ENCODE measurements at regions of chr7 and their contacts with region 1.

Region 1: DNA sequence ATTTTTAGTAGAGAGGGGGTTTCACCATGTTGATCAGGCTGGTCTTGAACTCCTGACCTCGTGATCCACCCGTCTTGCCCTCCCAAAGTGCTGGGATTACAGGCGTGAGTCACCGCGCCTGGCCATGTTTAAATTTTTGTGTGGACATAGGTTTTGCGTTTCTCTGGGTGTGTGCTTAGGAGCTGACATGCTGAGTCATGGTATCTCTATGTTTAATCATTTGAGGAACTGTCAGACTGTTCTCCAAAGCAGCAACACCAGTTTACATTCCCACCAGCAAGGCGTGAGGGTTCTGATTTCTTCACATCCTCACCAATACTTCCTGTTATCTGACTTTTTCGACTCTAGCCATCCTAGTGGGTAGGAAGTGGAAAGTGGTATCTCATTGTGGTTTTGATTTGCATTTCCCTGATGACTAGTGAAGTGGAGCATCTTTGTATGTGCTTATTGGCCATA is 153.7 kb downstream of the DNAJB6 start:
- DNase-seq: peak; percentile 58
- ATAC-seq: peak; percentile 81
- H3K4me3 Mint-ChIP-seq: no peak overlapping the region
- H3K27ac Mint-ChIP-seq: peak overlapping the region; percentile 35
- H3K4me1 Mint-ChIP-seq: peaks cover 35% of the 10 kb centered on the region
- H3K27me3 Mint-ChIP-seq: peaks cover 9% of the 10 kb centered on the region

Region 2: DNA sequence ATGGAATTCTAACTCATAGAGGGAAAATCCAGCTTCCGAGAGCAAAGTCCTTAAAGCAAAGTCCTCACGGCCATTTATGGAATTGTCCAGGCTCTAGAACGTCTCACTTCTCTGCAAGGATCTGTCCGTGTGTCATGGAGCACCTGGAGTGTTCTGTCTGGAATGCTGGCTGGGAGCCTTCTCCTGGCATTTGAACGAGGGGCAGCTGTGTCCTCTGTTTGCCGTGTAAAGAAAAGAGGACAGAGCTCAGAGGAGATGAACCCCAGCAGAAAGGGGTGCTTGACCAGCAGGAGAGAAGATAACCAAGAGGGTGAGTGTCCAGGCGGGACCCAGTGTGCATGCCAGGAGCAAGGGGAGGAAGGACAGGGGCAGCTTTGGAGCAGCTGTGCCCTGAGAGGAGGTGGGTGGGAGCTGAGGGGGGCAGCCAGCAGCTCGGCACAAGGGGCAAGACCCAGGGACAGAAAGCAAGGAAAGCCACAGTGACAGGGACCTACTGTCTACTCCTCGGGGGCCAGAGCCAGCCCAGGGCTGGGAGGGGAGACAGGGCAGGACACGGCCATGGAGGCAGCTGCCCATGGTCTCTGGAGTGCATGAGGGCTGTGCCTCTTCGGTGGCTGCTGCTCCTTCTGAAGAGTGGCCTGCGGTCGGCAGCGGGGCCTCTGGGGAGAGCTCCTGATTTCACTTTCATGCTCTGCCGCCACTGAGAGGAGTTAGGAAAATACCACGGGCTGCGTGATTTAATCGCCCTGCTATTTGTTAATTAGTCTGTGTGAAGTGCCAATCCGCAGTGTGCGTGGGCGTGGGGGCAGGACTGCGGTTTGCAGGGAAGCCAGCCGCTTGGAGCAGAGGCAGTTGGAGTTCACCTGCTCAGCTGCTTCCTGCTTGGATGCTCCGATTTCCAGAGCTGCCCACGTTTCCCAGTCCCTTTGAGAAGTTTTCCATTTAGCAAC is 1529.0 kb before region 1 on chr7:
- CTCF ChIA-PET with region 1: no interaction called
- POLR2A ChIA-PET with region 1: no interaction called
- intact Hi-C with region 1: loop called in 1 of 2 experiments (anchors 10 kb)
- DNase-seq: peak; percentile 68
- ATAC-seq: peak; percentile 27
- H3K4me3 Mint-ChIP-seq: no peak overlapping the region
- H3K27ac Mint-ChIP-seq: peak overlapping the region; percentile 14
- H3K4me1 Mint-ChIP-seq: peaks cover 28% of the 10 kb centered on the region
- H3K27me3 Mint-ChIP-seq: peaks cover 18% of the 10 kb centered on the region

Region 3: DNA sequence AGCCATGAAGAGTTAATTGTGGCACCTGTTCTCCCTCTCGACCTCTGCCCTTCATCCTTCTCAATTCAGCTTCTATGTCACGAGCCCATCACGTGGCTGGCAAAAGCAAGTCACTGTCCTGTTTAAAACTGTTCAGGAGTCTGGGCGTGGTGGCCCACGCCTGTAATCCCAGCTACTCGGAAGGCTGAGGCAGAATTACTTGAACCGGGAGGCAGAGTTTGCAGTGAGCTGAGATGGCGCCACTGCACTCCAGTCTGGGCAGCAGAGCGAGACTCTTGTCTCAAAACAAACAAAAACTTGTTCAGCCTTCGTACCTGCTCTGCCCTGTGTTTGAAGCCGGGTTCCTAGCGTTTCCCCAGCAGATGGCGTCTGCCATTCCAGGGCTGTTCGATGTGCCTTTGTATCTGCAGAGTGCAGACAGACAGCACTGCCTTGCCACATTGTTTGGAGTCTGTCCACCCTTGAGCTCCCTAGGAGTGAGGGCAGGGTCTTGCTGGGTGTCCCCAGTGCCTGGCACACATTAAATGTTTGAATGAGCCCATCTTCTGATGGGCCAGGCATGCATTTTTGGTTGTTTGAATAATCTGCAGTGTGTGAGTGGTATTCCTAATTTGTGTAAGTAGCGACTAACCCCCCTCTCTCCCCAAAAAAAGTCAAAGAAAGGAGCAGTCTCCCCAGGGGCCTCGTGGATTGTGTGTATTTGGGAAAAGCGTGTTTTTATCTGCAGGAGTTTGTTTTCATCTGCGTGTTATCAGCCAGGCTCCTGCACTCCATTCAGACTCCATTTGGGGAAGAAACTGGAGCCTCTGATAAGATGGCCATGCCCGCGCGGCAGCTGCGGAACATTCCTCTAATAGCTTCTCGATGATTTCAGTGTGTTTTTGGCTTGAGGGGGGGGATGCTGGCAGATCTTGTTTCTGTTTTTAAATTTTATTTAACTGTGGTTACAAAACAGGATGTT is 92.5 kb before region 1 on chr7:
- CTCF ChIA-PET with region 1: no interaction called
- POLR2A ChIA-PET with region 1: no interaction called
- intact Hi-C with region 1: no loop called
- DNase-seq: peak; percentile 46
- ATAC-seq: peak; percentile 55
- H3K4me3 Mint-ChIP-seq: no peak overlapping the region
- H3K27ac Mint-ChIP-seq: no peak overlapping the region
- H3K4me1 Mint-ChIP-seq: peaks cover 9% of the 10 kb centered on the region
- H3K27me3 Mint-ChIP-seq: no peaks in the 10 kb centered on the region

Region 4: DNA sequence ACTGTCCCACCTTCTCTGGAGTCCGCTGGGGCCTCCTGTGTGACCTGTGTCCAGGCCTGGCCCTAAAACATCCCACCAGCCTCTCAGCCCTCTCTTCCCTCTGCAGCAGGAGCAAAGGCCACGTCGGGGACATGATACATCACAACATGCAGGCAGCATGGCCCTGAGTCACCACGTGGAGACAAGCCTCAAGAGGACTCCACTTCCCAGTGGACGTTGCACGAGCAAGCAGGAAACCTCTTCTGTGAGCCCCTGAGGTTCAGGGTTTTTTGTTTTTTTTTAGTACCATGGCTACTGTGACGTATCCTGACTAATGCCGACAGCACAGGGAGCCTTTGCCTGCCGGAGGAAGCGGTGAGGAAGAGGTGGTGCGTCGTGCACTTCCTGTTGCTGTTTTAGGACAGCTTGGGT is 12.2 kb after region 1 on chr7:
- CTCF ChIA-PET with region 1: no interaction called
- POLR2A ChIA-PET with region 1: no interaction called
- intact Hi-C with region 1: loop called (anchors 1 kb)
- DNase-seq: peak; percentile 77
- ATAC-seq: peak; percentile 95
- H3K4me3 Mint-ChIP-seq: peak overlapping the region; percentile 67
- H3K27ac Mint-ChIP-seq: peak overlapping the region; percentile 92
- H3K4me1 Mint-ChIP-seq: peaks cover 31% of the 10 kb centered on the region
- H3K27me3 Mint-ChIP-seq: peaks cover 3% of the 10 kb centered on the region

Region 5: GRCh38 chr7:157827045-157827862 is 336.8 kb after region 1 on chr7:
- CTCF ChIA-PET with region 1: no interaction called
- POLR2A ChIA-PET with region 1: no interaction called
- intact Hi-C with region 1: loop called in 1 of 2 experiments (anchors 2 kb)
- DNase-seq: peak; percentile 68
- ATAC-seq: peak; percentile 55
- H3K4me3 Mint-ChIP-seq: no peak overlapping the region
- H3K27ac Mint-ChIP-seq: peak overlapping the region; percentile 23
- H3K4me1 Mint-ChIP-seq: peaks cover 36% of the 10 kb centered on the region
- H3K27me3 Mint-ChIP-seq: no peaks in the 10 kb centered on the region

Region 6: GRCh38 chr7:157932498-157933218 is 442.2 kb after region 1 on chr7:
- CTCF ChIA-PET with region 1: no interaction called
- POLR2A ChIA-PET with region 1: no interaction called
- intact Hi-C with region 1: loop called in 1 of 2 experiments (anchors 5 kb)
- DNase-seq: peak; percentile 43
- ATAC-seq: peak; percentile 77
- H3K4me3 Mint-ChIP-seq: peak overlapping the region; percentile 54
- H3K27ac Mint-ChIP-seq: peak overlapping the region; percentile 94
- H3K4me1 Mint-ChIP-seq: no peaks in the 10 kb centered on the region
- H3K27me3 Mint-ChIP-seq: peaks cover 2% of the 10 kb centered on the region